ENCODE measurements at regions of chr12 and their contacts with region 1.

Region 1: GRCh38 chr12:62631471-62632410 is 165.1 kb downstream of the MON2 start:
- DNase-seq: peak; percentile 50 to 81 (median 64)
- H3K4me3 ChIP-seq: peak overlapping the region; percentile 52 to 83 (median 70)
- H3K27ac ChIP-seq: peak overlapping the region in 51 of 59 donors; percentile 25 to 84 (median 67)
- H3K27me3 ChIP-seq: no peaks in the 10 kb centered on the region
- CTCF ChIP-seq: peak in 53 of 56 donors; percentile 28 to 72 (median 49)

Region 2: GRCh38 chr12:62562846-62563245 is 68.9 kb before region 1 on chr12:
- intact Hi-C with region 1: no loop called
- DNase-seq: no peak
- H3K4me3 ChIP-seq: no peak overlapping the region
- H3K27ac ChIP-seq: peak overlapping the region in 6 of 59 donors; percentile 5 to 57 (median 23)
- H3K27me3 ChIP-seq: no peaks in the 10 kb centered on the region
- CTCF ChIP-seq: no peak

Region 3: GRCh38 chr12:62673028-62673815 is 41.5 kb after region 1 on chr12:
- intact Hi-C with region 1: no loop called
- DNase-seq: no peak
- H3K4me3 ChIP-seq: no peak overlapping the region
- H3K27ac ChIP-seq: no peak overlapping the region
- H3K27me3 ChIP-seq: no peaks in the 10 kb centered on the region
- CTCF ChIP-seq: no peak

Region 4: GRCh38 chr12:62692884-62693283 is 61.1 kb after region 1 on chr12:
- intact Hi-C with region 1: loop called in 1 of 2 experiments (anchors 5 kb)
- DNase-seq: no peak
- H3K4me3 ChIP-seq: no peak overlapping the region
- H3K27ac ChIP-seq: peak overlapping the region in 6 of 59 donors; percentile 4 to 45 (median 31)
- H3K27me3 ChIP-seq: no peaks in the 10 kb centered on the region
- CTCF ChIP-seq: no peak

Region 5: GRCh38 chr12:62799126-62799736 is 167.5 kb after region 1 on chr12:
- intact Hi-C with region 1: no loop called
- DNase-seq: peak in 3 of 10 donors; percentile 58 to 77 (median 67)
- H3K4me3 ChIP-seq: no peak overlapping the region
- H3K27ac ChIP-seq: peak overlapping the region in 9 of 59 donors; percentile 1 to 57 (median 27)
- H3K27me3 ChIP-seq: no peaks in the 10 kb centered on the region
- CTCF ChIP-seq: peak; percentile 84 to 98 (median 93)

Region 6: DNA sequence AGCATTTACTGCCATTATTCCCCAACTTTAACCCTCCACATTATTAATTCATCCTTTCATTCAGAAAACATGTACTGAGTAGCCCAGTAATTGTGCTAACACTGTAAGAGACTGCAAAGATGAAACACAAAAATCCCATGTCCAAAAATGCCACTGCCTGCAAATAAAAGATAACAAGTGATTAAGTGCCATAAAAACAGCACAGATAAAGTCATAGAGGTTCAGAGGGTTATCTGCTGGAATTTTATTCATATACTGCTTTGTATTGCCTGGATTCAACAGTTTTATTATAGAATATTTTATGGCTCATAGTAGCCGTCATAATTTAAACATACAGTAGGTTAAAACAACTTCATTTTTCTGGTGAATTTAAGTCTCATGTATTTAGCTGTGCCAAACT is 1412.5 kb after region 1 on chr12:
- intact Hi-C with region 1: no loop called
- DNase-seq: no peak
- H3K4me3 ChIP-seq: no peak overlapping the region
- H3K27ac ChIP-seq: no peak overlapping the region
- H3K27me3 ChIP-seq: no peaks in the 10 kb centered on the region
- CTCF ChIP-seq: no peak

Measured in dorsolateral prefrontal cortex (tissue), 120 donors.